Uterus (tissue), 4 donors: ENCODE measurements at regions of chr9 and their contacts with region 1.

Region 1: DNA sequence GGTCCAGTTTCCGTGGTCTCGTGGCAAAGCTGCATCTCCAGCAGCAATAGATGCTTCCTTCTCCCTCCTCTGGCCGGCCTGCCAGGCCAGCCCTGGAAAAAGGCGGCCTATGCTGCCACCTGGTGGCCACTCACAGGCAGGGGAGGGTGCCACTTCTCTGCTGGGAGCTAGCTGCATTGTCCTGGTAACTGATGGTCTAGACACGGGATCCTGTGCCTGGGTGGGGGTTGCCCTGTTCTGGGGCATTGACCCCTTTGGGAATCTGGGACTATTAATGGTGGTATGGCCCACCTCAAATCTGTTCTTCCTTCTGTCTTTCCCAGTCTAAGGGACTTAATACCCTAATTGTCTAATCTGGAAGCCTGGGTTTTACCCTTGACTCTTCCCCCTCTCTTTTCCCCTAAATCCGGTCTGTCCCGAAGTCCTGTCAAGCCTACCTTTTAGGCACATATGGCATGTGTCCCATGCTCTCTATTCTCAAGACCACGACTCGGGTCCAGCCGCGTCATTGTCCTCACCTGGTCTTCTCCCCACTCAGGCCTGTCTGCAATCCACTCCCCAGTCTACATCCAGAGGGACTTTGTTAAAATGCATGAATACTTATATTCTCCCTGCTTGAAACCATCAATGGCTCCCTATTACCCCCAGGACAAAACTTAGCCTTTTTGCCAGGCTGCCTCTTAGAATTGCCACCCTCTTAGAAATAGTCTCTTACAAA is 20.0 kb upstream of the PTGS1 start:
- DNase-seq: peak; percentile 71 to 80
- H3K4me3 ChIP-seq: no peak overlapping the region
- H3K27ac ChIP-seq: no peak overlapping the region
- H3K4me1 ChIP-seq: peaks cover 0 to 3% of the 10 kb centered on the region in 2 donors
- H3K27me3 ChIP-seq: no peaks in the 10 kb centered on the region
- CTCF ChIP-seq: peak; percentile 91 to 98 (median 96)
- POLR2A ChIP-seq: no peak

Region 2: GRCh38 chr9:122122903-122123632 is 227.7 kb before region 1 on chr9:
- intact Hi-C with region 1: loop called (anchors 2 kb)
- DNase-seq: peak; percentile 64 to 66
- H3K4me3 ChIP-seq: no peak overlapping the region
- H3K27ac ChIP-seq: no peak overlapping the region
- H3K4me1 ChIP-seq: peaks cover 0 to 4% of the 10 kb centered on the region in 2 donors
- H3K27me3 ChIP-seq: no peaks in the 10 kb centered on the region
- CTCF ChIP-seq: peak; percentile 78 to 92 (median 86)
- POLR2A ChIP-seq: no peak